Sigmoid colon (tissue), 7 donors: ENCODE measurements at regions of chr12 and their contacts with region 1.

Region 1: DNA sequence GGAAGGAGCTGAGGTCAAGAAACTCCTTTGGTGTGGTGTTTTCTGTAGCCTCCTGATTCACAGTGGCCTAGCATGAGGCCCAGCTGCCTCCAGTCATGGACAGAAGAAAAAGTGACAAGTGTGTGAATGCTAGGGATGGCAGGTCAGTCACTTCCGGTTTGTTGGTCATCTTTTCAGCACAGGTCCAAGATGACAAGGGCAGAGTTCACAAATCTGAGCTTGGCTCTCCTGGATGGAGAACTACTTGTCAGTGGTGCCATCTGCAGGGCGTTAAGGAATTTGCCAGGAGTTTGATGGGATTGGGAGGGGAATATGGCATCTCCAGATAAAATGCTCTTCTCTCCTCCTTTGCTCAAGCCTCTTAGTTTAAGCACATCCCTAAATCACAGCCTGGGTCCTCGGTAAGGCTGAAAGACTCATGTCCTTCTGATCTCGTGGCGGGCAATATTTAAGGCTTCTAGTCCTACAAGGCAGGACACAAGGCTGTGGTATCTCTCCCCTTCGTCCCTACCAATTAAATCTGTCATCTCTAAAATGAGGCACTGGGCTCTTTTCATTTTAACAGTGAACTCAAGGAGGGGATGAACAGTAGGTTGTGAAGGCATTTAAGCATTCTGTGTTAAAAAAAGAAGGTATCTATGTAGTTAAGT is 10.0 kb downstream of the TUBA1B start:
- DNase-seq: peak; percentile 67
- H3K4me3 ChIP-seq: no peak overlapping the region
- H3K27ac ChIP-seq: no peak overlapping the region
- H3K4me1 ChIP-seq: no peaks in the 10 kb centered on the region
- H3K27me3 ChIP-seq: no peaks in the 10 kb centered on the region
- CTCF ChIP-seq: peak; percentile 33 to 58 (median 45)
- EP300 ChIP-seq: no peak
- POLR2A ChIP-seq: no peak

Region 2: DNA sequence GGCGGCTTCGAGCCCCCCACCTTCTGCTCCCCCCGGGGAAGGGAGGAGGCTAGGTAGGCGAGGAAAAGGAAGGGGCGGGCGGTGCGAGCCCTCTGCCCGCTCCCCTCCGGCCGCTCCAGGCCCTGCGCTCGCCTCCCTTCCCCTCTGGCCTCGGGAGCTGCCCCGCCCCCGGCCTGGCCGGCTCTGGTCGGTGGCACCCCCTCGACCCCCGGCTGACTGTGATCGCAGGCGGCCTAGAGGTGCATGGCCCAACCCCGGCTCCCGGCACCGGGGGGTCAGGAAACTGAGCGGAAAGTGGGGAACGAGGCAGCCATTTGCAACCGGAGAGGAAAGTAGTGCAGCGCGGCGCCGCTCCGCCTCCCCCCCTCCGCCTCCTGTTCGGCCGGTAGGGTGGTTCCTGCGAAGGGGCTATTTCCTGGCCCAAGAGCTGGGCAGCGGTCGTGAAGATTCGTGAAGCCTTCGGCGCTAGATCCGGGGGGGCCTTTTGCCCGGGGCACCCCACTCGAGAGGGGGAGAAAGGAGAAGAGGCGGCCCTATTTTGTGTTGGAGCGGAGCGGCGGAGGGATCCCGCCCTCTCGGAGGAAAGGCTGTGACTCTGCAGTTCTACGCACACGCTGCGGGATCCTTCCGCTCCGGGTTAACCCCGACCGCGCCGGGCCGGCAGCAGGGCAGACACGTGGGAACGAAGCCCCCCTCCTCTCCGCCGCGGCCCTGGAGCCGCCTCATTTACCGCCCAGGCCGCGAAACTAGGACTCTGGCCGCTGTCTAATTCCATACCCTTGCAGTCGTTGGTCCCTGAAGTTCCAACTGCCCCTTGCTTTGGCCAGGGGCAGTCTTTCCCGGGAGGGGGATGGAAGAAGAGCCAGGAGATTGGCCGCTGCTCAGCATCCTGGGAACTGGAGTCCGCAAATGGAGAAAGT is 60.7 kb before region 1 on chr12 and contains the start of gene KMT2D:
- intact Hi-C with region 1: loop called (anchors 1 kb)
- DNase-seq: peak; percentile 96
- H3K4me3 ChIP-seq: peak within 1 kb of the TSS; percentile 87 to 100 (median 98)
- H3K27ac ChIP-seq: peak within 1 kb of the TSS; percentile 94 to 99 (median 96)
- H3K4me1 ChIP-seq: peaks cover 0 to 51% (median 42%) of the 10 kb centered on the region in 4 donors
- H3K27me3 ChIP-seq: no peaks in the 10 kb centered on the region
- CTCF ChIP-seq: peak; percentile 46 to 86 (median 67)
- EP300 ChIP-seq: peak in 1 of 4 donors; percentile 36
- POLR2A ChIP-seq: peak; percentile 45 to 58
- total RNA-seq, gene KMT2D: 18.2 to 52.9 (median 30.6) TPM

Region 3: GRCh38 chr12:49088190-49088931 is 32.8 kb before region 1 on chr12:
- intact Hi-C with region 1: loop called (anchors 2 kb)
- DNase-seq: peak; percentile 87
- H3K4me3 ChIP-seq: no peak overlapping the region
- H3K27ac ChIP-seq: peak overlapping the region in 1 of 4 donors; percentile 20
- H3K4me1 ChIP-seq: peaks cover 0 to 51% (median 39%) of the 10 kb centered on the region in 4 donors
- H3K27me3 ChIP-seq: peaks cover 41 to 51% (median 49%) of the 10 kb centered on the region in 3 donors
- CTCF ChIP-seq: peak; percentile 69 to 92 (median 82)
- EP300 ChIP-seq: no peak
- POLR2A ChIP-seq: no peak